ENCODE measurements at regions of chr3 and their contacts with region 1.

Region 1: GRCh38 chr3:73502609-73503583 is 121.8 kb downstream of the PDZRN3 start:
- DNase-seq: peak; percentile 38 to 58
- ATAC-seq: peak in 7 of 8 donors; percentile 39 to 66 (median 58)
- H3K4me3 ChIP-seq: no peak overlapping the region
- H3K27ac ChIP-seq: peak overlapping the region in 6 of 10 donors; percentile 0 to 45 (median 36)
- H3K4me1 ChIP-seq: peaks cover 0 to 63% (median 18%) of the 10 kb centered on the region in 9 donors
- H3K27me3 ChIP-seq: no peaks in the 10 kb centered on the region
- CTCF ChIP-seq: peak; percentile 41 to 88 (median 80)

Region 2: DNA sequence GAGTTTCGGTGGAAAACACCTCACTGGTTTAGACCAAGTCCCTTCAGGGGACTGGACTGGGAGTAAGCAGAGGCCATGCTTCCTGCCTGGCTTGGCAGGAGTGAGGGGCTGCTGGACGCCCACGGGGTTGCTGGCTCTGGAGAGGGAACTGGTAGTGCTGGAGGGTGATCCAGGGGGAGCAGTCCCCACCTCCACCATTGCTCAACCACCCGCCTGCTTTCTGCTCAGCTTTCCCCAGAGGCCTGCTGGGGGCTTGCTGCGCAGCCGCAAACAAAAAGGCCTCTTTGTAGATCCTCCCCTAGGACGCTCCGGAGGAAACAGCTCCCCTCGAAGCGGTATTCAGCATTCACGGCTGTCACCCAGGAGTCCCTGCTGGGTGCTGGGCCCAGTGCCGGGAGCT is 407.9 kb before region 1 on chr3:
- intact Hi-C with region 1: loop called in 6 of 10 experiments (anchors 2 to 5 kb)
- DNase-seq: peak in 1 of 2 donors; percentile 31
- ATAC-seq: peak in 5 of 8 donors; percentile 22 to 54 (median 45)
- H3K4me3 ChIP-seq: no peak overlapping the region
- H3K27ac ChIP-seq: no peak overlapping the region
- H3K4me1 ChIP-seq: peaks cover 0 to 12% (median 0%) of the 10 kb centered on the region in 9 donors
- H3K27me3 ChIP-seq: no peaks in the 10 kb centered on the region
- CTCF ChIP-seq: no peak

Region 3: GRCh38 chr3:73451306-73451944 is 51.5 kb before region 1 on chr3:
- intact Hi-C with region 1: loop called in 6 of 10 experiments (anchors 2 to 5 kb)
- DNase-seq: no peak
- ATAC-seq: peak in 4 of 8 donors; percentile 19 to 53 (median 42)
- H3K4me3 ChIP-seq: no peak overlapping the region
- H3K27ac ChIP-seq: peak overlapping the region in 1 of 10 donors; percentile 8
- H3K4me1 ChIP-seq: peaks cover 0 to 76% (median 31%) of the 10 kb centered on the region in 9 donors
- H3K27me3 ChIP-seq: no peaks in the 10 kb centered on the region
- CTCF ChIP-seq: no peak

Region 4: GRCh38 chr3:73624821-73625665 is 122.1 kb after region 1 on chr3 and contains the start of gene PDZRN3:
- intact Hi-C with region 1: loop called in 5 of 10 experiments (anchors 2 to 5 kb)
- DNase-seq: peak; percentile 61 to 70
- ATAC-seq: peak; percentile 41 to 66 (median 55)
- H3K4me3 ChIP-seq: peak within 1 kb of the TSS; percentile 29 to 69 (median 65)
- H3K27ac ChIP-seq: peak within 1 kb of the TSS; percentile 82 to 96 (median 90)
- H3K4me1 ChIP-seq: peaks cover 0 to 48% (median 18%) of the 10 kb centered on the region in 9 donors
- H3K27me3 ChIP-seq: peaks cover 0 to 33% (median 0%) of the 10 kb centered on the region in 7 donors
- CTCF ChIP-seq: no peak
- total RNA-seq, gene PDZRN3: 63.4 to 143 (median 82.0) TPM

Region 5: DNA sequence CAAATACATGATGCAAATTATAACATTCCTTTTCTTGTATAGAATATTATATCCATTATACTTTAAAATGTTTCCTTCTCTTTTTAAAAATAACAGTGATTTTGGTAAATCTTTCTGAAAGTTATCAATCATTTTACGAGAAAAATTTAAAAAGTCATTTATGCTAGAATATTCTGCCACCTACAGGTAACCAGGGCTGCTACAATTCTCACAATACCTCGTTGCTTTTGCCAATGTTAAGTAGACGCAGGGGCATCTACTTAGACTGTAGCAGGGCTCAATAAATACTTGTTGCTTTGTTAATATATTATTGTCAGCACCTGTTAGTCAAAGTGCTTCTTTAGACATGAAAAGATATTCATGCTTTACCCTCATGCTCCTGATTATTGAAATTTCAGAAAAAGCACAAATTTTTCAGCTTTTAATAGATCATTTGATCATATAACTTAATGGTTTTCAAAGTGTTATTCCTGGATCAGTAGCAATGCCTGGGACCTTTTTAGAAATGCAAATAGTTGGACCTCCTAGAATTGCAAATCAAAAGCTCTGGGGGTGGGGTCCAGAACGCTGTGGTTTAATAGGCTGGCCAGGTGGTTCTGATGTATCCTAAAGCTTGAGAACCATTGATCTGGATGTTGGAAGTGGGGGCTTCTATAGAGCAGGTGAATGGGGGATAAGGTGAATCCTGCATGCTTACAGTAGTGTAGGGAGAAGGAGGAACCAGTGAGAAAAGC is 345.4 kb after region 1 on chr3:
- intact Hi-C with region 1: loop called in 9 of 10 experiments (anchors 5 to 10 kb)
- DNase-seq: no peak
- ATAC-seq: peak in 1 of 8 donors; percentile 57
- H3K4me3 ChIP-seq: no peak overlapping the region
- H3K27ac ChIP-seq: no peak overlapping the region
- H3K4me1 ChIP-seq: peaks cover 0 to 7% (median 0%) of the 10 kb centered on the region in 9 donors
- H3K27me3 ChIP-seq: no peaks in the 10 kb centered on the region
- CTCF ChIP-seq: peak; percentile 27 to 81 (median 68)

Measured in heart right ventricle (tissue), 16 donors.